Posterior cingulate gyrus (tissue), 11 donors: ENCODE measurements at regions of chr6 and their contacts with region 1.

Region 1: DNA sequence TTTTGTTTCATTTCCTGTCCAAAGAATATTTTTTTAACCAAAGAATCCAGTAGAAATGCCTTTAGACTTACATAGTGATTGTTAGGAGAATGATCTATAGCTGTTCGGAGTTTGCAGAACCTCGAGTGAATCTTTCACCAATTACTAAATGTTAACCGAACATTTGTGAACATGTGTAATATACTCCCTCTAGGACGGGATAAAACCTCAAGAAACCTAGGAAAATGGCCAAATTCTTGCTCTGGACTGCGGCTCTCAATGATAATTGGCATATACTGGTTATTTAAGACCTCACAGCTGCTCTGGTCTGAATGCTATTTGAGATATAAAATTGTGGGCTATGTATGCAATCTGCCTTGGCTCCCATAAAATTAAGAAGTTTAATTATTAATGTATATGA is 137.1 kb downstream of the PACRG start:
- DNase-seq: no peak

Region 2: GRCh38 chr6:162973151-162973872 is 108.4 kb after region 1 on chr6:
- intact Hi-C with region 1: loop called (anchors 10 kb)
- DNase-seq: no peak

Region 3: GRCh38 chr6:163026893-163027292 is 162.0 kb after region 1 on chr6:
- intact Hi-C with region 1: no loop called
- DNase-seq: no peak

Region 4: GRCh38 chr6:163048345-163048744 is 183.4 kb after region 1 on chr6:
- intact Hi-C with region 1: no loop called
- DNase-seq: no peak